ENCODE measurements at regions of chr10 and their contacts with region 1.

Region 1: GRCh38 chr10:102132563-102133372 is at the start of gene PPRC1:
- DNase-seq: peak; percentile 99
- H3K4me3 Mint-ChIP-seq: peak within 1 kb of the TSS; percentile 93
- H3K27ac Mint-ChIP-seq: peak within 1 kb of the TSS; percentile 96
- H3K4me1 Mint-ChIP-seq: peaks cover 37% of the 10 kb centered on the region
- H3K27me3 Mint-ChIP-seq: no peaks in the 10 kb centered on the region
- CTCF ChIP-seq: peak; percentile 65
- total RNA-seq, gene PPRC1: 50.4 and 68.2 TPM in 2 replicates

Region 2: GRCh38 chr10:101903827-101904550 is 228.8 kb before region 1 on chr10:
- CTCF ChIA-PET with region 1: no interaction called
- POLR2A ChIA-PET with region 1: no interaction called
- intact Hi-C with region 1: no loop called
- DNase-seq: no peak
- H3K4me3 Mint-ChIP-seq: no peak overlapping the region
- H3K27ac Mint-ChIP-seq: no peak overlapping the region
- H3K4me1 Mint-ChIP-seq: no peaks in the 10 kb centered on the region
- H3K27me3 Mint-ChIP-seq: no peaks in the 10 kb centered on the region
- CTCF ChIP-seq: no peak

Region 3: DNA sequence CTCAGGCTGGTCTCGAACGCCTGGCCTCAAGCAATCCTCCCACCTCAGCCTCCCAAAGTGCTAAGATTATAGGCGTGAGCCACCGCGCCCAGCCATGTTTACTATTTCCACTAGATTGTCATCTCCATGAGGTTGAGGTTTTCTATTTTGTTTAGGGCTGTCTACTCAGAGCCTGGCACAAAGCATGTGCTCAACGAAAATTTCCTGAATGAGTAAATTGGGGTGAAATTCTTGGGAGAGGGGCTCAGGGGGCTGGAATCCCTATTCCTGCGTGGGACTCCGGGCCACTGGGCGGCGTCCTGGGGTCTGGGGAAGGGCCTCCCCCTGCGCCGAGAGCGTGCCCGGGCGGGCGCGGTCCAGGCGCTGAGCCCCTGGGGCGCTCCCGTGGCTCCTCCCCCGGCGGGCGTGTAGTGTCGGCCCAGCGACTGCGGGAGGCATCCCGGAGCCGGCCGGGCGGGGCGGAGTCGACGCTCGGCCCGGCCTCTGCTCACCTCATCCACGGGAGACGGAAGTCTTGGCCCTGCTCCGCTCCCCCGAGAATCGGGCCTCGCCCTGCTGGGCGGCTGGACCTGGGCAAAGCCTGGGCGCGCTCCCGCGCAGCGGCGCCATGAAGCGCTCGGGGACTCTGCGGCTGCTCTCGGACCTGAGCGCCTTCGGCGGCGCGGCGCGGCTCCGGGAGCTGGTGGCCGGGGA is 67.8 kb before region 1 on chr10 and contains the start of gene HPS6:
- CTCF ChIA-PET with region 1: interaction called, 5 read pairs
- POLR2A ChIA-PET with region 1: no interaction called
- intact Hi-C with region 1: loop called (anchors 1 kb)
- DNase-seq: peak; percentile 93
- H3K4me3 Mint-ChIP-seq: peak within 1 kb of the TSS; percentile 83
- H3K27ac Mint-ChIP-seq: peak within 1 kb of the TSS; percentile 83
- H3K4me1 Mint-ChIP-seq: peaks cover 16% of the 10 kb centered on the region
- H3K27me3 Mint-ChIP-seq: no peaks in the 10 kb centered on the region
- CTCF ChIP-seq: no peak
- total RNA-seq, gene HPS6: 15.0 and 16.6 TPM in 2 replicates

Region 4: DNA sequence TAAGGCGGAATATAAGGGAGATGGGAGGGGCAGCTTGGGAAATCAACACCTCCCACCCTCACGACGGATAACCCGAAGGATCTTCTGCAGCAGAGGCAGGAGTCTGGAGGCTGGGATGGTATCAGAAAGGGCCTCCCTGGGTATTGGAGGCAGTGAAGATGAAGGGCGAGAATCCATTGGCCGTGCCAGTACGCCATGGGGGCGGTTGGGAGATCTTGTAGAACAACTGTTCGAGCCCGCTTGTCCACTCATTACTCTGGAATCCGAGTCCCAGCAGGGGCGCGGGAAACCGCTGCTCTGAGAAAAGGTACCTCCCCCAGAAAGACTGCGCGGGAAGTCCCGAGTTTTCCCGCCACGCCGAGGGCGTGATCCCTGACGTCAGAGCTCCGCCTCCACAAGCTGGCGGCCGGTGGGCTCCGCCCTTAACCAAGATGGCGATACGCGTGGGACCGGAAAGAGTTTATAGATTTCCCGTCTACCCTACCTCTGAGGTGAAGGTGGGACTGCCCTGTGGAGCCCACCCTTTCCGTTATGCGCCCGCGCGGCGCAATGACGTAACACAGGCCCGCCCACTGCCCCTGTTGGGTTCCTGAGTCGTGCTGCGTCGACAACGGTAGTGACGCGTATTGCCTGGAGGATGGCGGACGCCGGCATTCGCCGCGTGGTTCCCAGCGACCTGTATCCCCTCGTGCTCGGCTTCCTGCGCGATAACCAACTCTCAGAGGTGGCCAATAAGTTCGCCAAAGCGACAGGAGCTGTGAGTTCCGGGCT is 19.2 kb after region 1 on chr10 and contains the start of gene NOLC1:
- CTCF ChIA-PET with region 1: interaction called, 5 read pairs
- POLR2A ChIA-PET with region 1: interaction called, 47 read pairs
- intact Hi-C with region 1: loop called (anchors 1 kb)
- DNase-seq: peak; percentile 98
- H3K4me3 Mint-ChIP-seq: peak within 1 kb of the TSS; percentile 75
- H3K27ac Mint-ChIP-seq: peak within 1 kb of the TSS; percentile 92
- H3K4me1 Mint-ChIP-seq: peaks cover 14% of the 10 kb centered on the region
- H3K27me3 Mint-ChIP-seq: no peaks in the 10 kb centered on the region
- CTCF ChIP-seq: no peak
- total RNA-seq, gene NOLC1: 122 and 168 TPM in 2 replicates